ENCODE measurements at regions of chr3 and their contacts with region 1.

Region 1: GRCh38 chr3:139519998-139520737 is 19.4 kb downstream of the RBP1 start:
- DNase-seq: peak in 1 of 2 experiments; percentile 80
- H3K4me3 ChIP-seq: no peak overlapping the region
- H3K27ac ChIP-seq: no peak overlapping the region
- H3K4me1 ChIP-seq: peaks cover 0 to 9% (median 6%) of the 10 kb centered on the region in 4 experiments; a peak in 4 of 7 replicates
- H3K27me3 ChIP-seq: peaks cover 0 to under 1% (median 0%) of the 10 kb centered on the region in 4 experiments; a peak in 3 of 7 replicates
- CTCF ChIP-seq: peak; percentile 67 to 84 (median 77)
- EP300 ChIP-seq: no peak
- POLR2A ChIP-seq: no peak
- RAD21 ChIP-seq: peak; percentile 56 to 67

Region 2: DNA sequence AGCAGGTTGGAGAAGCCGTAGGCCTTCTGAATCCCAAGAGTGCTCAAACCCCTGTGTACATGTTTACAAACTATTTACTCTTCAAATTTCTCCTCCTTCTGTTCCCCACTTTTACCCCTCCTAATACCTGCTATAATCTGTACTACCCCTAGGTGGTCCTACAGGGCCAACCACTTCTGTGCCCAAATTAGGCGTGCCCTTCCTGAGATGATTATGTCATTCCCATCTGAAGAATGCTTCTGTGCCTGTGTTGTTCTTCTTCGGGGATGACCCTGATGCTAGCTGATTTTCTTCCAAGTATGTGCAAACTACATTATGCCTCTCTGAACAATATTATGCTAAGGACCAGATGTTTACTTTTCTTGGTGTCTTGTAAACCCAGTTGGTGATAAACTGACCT is 64.3 kb before region 1 on chr3:
- CTCF ChIA-PET with region 1: interaction called, 61 read pairs
- POLR2A ChIA-PET with region 1: no interaction called
- DNase-seq: no peak
- H3K4me3 ChIP-seq: no peak overlapping the region
- H3K27ac ChIP-seq: no peak overlapping the region
- H3K4me1 ChIP-seq: peaks cover 16 to 25% (median 20%) of the 10 kb centered on the region in 4 experiments
- H3K27me3 ChIP-seq: no peaks in the 10 kb centered on the region
- CTCF ChIP-seq: peak in 2 of 3 experiments; percentile 34 to 45; a peak in 2 of 4 replicates
- EP300 ChIP-seq: no peak
- POLR2A ChIP-seq: no peak
- RAD21 ChIP-seq: peak; percentile 45 to 52

Region 3: GRCh38 chr3:139477710-139478640 is 42.2 kb before region 1 on chr3:
- CTCF ChIA-PET with region 1: interaction called, 15 read pairs
- POLR2A ChIA-PET with region 1: no interaction called
- DNase-seq: peak in 1 of 2 experiments; percentile 26
- H3K4me3 ChIP-seq: no peak overlapping the region
- H3K27ac ChIP-seq: no peak overlapping the region
- H3K4me1 ChIP-seq: peaks cover 0 to 5% (median 1%) of the 10 kb centered on the region in 4 experiments; a peak in 2 of 7 replicates
- H3K27me3 ChIP-seq: no peaks in the 10 kb centered on the region
- CTCF ChIP-seq: no peak
- EP300 ChIP-seq: no peak
- POLR2A ChIP-seq: no peak
- RAD21 ChIP-seq: no peak

Region 4: DNA sequence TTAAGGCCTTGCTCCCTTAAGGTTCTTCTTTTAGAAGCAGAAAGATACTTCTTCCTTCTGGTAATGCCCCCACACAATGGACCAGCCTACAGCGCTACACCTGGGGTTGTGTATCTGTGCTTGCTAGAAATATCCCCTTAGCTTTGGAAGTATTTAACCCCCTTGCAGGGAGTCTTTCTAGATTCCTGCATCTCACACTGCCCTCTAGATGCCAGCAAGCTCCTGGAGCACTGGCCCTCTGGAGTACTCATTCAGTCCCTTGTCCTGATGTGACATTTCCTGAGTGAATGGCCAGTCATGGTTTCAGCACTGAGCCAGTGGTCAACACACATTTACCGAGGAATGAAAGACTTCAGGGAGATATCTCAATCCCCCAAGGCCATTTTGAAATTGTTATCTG is 13.4 kb before region 1 on chr3:
- CTCF ChIA-PET with region 1: interaction called, 95 read pairs
- POLR2A ChIA-PET with region 1: interaction called, 3 read pairs
- DNase-seq: no peak
- H3K4me3 ChIP-seq: no peak overlapping the region
- H3K27ac ChIP-seq: no peak overlapping the region
- H3K4me1 ChIP-seq: no peaks in the 10 kb centered on the region
- H3K27me3 ChIP-seq: no peaks in the 10 kb centered on the region
- CTCF ChIP-seq: peak; percentile 29 to 37 (median 34); a peak in 3 of 4 replicates
- EP300 ChIP-seq: no peak
- POLR2A ChIP-seq: no peak
- RAD21 ChIP-seq: peak; percentile 51 to 57

Region 5: DNA sequence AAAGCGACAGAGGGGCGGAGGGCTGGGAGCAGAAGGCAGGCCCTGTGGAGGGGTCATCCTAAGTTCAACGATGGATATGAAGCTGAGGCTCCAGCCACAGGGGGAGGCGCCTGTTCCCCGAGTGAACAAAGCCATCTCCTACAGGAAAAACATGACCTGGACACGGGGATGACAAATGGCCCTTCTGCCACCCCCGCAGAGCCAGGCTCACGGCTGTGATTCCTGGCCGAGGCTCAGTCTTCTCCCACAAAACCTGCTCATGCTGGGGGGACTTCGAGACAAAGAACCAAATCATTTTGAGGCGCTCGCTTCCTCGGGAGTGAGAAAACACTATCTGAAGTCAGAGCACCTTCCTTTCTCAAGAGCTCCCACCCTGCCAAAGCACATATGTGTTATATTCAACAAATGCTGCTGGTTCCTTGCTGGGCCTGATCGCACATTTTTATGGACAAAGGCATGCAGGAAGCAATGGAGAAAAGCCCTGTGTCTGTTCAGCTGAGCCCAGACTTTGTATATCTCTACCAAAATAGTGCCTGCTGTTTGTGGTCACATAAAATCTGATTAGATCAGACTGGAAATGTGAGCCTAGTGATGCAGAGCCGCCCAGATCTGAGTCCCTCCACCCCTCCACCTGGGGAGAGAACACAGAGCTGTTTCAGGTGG is 13.7 kb after region 1 on chr3:
- CTCF ChIA-PET with region 1: interaction called, 35 read pairs
- POLR2A ChIA-PET with region 1: interaction called, 8 read pairs
- DNase-seq: no peak
- H3K4me3 ChIP-seq: no peak overlapping the region
- H3K27ac ChIP-seq: no peak overlapping the region
- H3K4me1 ChIP-seq: peaks cover 2 to 22% (median 21%) of the 10 kb centered on the region in 4 experiments
- H3K27me3 ChIP-seq: peaks cover 0 to 15% (median 11%) of the 10 kb centered on the region in 4 experiments; a peak in 4 of 7 replicates
- CTCF ChIP-seq: no peak
- EP300 ChIP-seq: no peak
- POLR2A ChIP-seq: no peak
- RAD21 ChIP-seq: no peak

Region 6: GRCh38 chr3:139577909-139578308 is 57.7 kb after region 1 on chr3:
- CTCF ChIA-PET with region 1: no interaction called
- POLR2A ChIA-PET with region 1: no interaction called
- DNase-seq: no peak
- H3K4me3 ChIP-seq: no peak overlapping the region
- H3K27ac ChIP-seq: no peak overlapping the region
- H3K4me1 ChIP-seq: no peaks in the 10 kb centered on the region
- H3K27me3 ChIP-seq: no peaks in the 10 kb centered on the region
- CTCF ChIP-seq: no peak
- EP300 ChIP-seq: no peak
- POLR2A ChIP-seq: no peak
- RAD21 ChIP-seq: no peak

Region 7: GRCh38 chr3:139588450-139588849 is 68.3 kb after region 1 on chr3:
- CTCF ChIA-PET with region 1: interaction called, 18 read pairs
- POLR2A ChIA-PET with region 1: no interaction called
- DNase-seq: peak in 1 of 2 experiments; percentile 83
- H3K4me3 ChIP-seq: no peak overlapping the region
- H3K27ac ChIP-seq: no peak overlapping the region
- H3K4me1 ChIP-seq: no peaks in the 10 kb centered on the region
- H3K27me3 ChIP-seq: no peaks in the 10 kb centered on the region
- CTCF ChIP-seq: peak; percentile 67 to 81 (median 74)
- EP300 ChIP-seq: no peak
- POLR2A ChIP-seq: no peak
- RAD21 ChIP-seq: peak; percentile 84 to 90

Region 8: DNA sequence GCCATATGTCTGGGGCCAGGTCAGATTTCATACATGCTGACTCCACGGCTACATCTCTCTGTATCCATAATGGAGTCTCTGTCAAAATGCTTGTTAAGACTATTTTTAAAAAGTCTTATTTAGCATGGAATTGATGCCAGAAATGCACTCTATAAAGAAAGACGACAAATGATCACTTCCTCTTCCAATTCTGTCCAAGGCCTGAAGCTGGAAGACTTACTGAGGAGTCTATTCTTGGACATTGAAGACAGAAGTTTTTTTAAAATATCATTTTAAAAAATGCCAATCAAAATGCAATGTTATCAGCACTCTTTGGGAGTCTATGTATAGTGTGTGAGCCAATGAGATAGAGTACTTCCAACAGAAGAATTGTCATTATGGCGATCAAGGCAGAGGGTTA is 185.5 kb after region 1 on chr3:
- CTCF ChIA-PET with region 1: no interaction called
- POLR2A ChIA-PET with region 1: no interaction called
- DNase-seq: no peak
- H3K4me3 ChIP-seq: no peak overlapping the region
- H3K27ac ChIP-seq: no peak overlapping the region
- H3K4me1 ChIP-seq: no peaks in the 10 kb centered on the region
- H3K27me3 ChIP-seq: no peaks in the 10 kb centered on the region
- CTCF ChIP-seq: no peak
- EP300 ChIP-seq: no peak
- POLR2A ChIP-seq: no peak
- RAD21 ChIP-seq: no peak

Region 9: DNA sequence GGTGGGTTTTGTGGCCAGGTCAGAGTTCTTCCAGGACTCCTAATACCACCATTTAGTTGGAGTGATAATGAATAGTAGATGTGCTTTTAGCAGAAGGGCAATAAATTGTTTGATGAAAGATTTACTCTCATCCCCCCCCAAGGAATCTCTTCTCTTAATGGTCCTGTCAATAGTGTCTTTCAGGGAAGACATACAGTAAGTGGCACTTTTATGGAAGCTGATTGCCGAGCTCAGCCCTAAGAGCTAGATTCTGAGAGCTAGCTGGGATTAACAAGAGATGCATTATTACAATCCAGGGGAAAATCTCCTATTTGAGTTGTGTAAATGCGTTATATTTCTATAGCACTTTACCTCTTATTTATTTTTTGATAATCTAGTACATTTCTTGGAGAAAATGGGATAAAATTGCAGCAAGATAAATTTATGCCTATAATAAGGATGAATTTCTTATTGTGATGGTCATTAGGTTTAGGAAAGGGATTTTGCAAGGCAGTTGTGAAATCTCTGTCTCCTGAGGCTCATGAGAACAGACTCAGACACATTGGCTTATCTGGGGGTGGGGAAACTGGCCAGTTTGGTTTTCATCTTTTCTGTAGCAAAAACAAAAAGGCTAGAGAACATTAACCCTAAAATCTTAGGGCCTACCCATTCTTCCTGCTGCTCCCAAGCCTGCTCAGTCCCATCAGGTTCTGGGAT is 373.2 kb after region 1 on chr3:
- CTCF ChIA-PET with region 1: no interaction called
- POLR2A ChIA-PET with region 1: no interaction called
- DNase-seq: no peak
- H3K4me3 ChIP-seq: no peak overlapping the region
- H3K27ac ChIP-seq: no peak overlapping the region
- H3K4me1 ChIP-seq: no peaks in the 10 kb centered on the region
- H3K27me3 ChIP-seq: no peaks in the 10 kb centered on the region
- CTCF ChIP-seq: no peak
- EP300 ChIP-seq: no peak
- POLR2A ChIP-seq: no peak
- RAD21 ChIP-seq: no peak

Measured in H1 (cell line).